ENCODE measurements at regions of chr20 and their contacts with region 1.

Region 1: DNA sequence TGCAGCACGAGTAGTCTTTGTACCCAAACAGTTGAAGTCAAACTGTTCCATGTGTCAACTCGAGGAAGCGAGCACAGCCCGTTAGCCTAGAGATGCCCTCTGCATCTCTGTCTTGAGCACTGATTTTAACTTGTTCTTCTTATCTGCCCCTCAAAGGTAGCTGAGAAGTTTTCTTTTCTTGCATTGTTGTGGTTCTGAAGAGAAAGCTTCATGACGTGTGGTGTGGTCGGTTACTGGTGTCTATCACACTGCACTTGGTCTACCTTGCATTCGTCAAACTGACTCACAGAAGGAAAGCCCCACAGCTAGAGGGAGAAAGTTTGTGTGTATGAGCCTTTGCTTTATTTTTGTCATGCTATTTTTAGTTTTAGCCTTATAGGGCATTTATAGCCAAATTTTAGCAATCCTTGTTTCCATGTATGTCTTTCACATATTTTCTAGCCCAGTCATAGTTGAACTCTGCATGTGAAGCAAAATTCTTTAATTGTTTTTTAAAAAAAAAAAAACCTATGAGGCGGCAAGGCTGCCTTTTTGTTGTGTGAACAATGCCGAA is 115.1 kb downstream of the JAG1 start:
- DNase-seq: peak; percentile 92
- ATAC-seq: peak; percentile 75
- H3K4me3 ChIP-seq: peak overlapping the region; percentile 22; the same call in 1 of the 2 replicates
- H3K27ac ChIP-seq: peak overlapping the region; percentile 96
- H3K4me1 ChIP-seq: peaks cover 74% of the 10 kb centered on the region
- H3K27me3 ChIP-seq: no peaks in the 10 kb centered on the region
- CTCF ChIP-seq: no peak; the same call in 1 of the 2 replicates

Region 2: GRCh38 chr20:10115021-10115420 is 443.7 kb before region 1 on chr20:
- CTCF ChIA-PET with region 1: no interaction called
- POLR2A ChIA-PET with region 1: no interaction called
- intact Hi-C with region 1: no loop called
- DNase-seq: peak; percentile 73
- ATAC-seq: no peak
- H3K4me3 ChIP-seq: no peak overlapping the region
- H3K27ac ChIP-seq: no peak overlapping the region
- H3K4me1 ChIP-seq: peaks cover 28% of the 10 kb centered on the region
- H3K27me3 ChIP-seq: no peaks in the 10 kb centered on the region
- CTCF ChIP-seq: no peak

Region 3: GRCh38 chr20:10249048-10249770 is 309.5 kb before region 1 on chr20:
- CTCF ChIA-PET with region 1: no interaction called
- POLR2A ChIA-PET with region 1: no interaction called
- intact Hi-C with region 1: no loop called
- DNase-seq: peak; percentile 76
- ATAC-seq: peak; percentile 8; the same call in 1 of the 2 replicates
- H3K4me3 ChIP-seq: no peak overlapping the region
- H3K27ac ChIP-seq: peak overlapping the region; percentile 81; the same call in 1 of the 2 replicates
- H3K4me1 ChIP-seq: peaks cover 30% of the 10 kb centered on the region
- H3K27me3 ChIP-seq: peaks cover 22% of the 10 kb centered on the region
- CTCF ChIP-seq: no peak

Region 4: DNA sequence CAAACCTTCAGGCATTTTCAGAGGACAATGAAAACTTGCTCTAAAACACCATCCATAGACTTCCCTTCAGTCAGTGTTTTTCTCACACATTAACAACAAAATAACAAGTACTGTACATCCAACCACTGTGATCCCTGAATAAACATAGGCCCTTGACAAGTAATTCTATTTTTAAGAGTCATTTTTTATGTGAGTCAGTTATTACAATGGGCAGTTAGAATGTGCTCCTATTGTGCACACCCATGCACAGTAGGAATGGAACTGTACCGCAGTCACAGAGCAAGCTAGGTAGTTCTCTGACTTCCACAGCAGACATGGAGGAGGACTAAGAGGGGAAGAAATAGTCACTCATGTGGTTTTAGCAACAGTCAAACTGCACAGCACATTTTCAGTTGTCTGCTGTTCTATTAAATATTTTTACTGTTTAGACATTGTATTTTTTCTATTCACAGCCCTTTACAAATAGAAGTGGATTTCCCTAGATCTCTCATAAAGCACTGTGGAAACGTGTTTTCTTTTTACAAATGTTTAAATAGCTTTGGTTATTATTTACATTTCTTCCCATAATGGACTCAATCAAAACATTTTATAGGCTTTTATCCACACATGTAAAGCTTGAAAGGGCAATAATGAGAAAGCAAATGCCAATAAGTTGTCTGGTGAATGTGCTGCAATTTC is 14.7 kb after region 1 on chr20:
- CTCF ChIA-PET with region 1: no interaction called
- POLR2A ChIA-PET with region 1: no interaction called
- intact Hi-C with region 1: loop called (anchors 1 kb)
- DNase-seq: peak; percentile 82
- ATAC-seq: peak; percentile 89
- H3K4me3 ChIP-seq: no peak overlapping the region
- H3K27ac ChIP-seq: peak overlapping the region; percentile 84
- H3K4me1 ChIP-seq: peaks cover 37% of the 10 kb centered on the region
- H3K27me3 ChIP-seq: no peaks in the 10 kb centered on the region
- CTCF ChIP-seq: no peak

Region 5: GRCh38 chr20:10578607-10579006 is 19.9 kb after region 1 on chr20:
- CTCF ChIA-PET with region 1: no interaction called
- POLR2A ChIA-PET with region 1: no interaction called
- intact Hi-C with region 1: loop called (anchors 1 kb)
- DNase-seq: peak; percentile 96
- ATAC-seq: peak; percentile 78
- H3K4me3 ChIP-seq: peak overlapping the region; percentile 13; the same call in 1 of the 2 replicates
- H3K27ac ChIP-seq: peak overlapping the region; percentile 97
- H3K4me1 ChIP-seq: peaks cover 71% of the 10 kb centered on the region
- H3K27me3 ChIP-seq: no peaks in the 10 kb centered on the region
- CTCF ChIP-seq: no peak

Region 6: DNA sequence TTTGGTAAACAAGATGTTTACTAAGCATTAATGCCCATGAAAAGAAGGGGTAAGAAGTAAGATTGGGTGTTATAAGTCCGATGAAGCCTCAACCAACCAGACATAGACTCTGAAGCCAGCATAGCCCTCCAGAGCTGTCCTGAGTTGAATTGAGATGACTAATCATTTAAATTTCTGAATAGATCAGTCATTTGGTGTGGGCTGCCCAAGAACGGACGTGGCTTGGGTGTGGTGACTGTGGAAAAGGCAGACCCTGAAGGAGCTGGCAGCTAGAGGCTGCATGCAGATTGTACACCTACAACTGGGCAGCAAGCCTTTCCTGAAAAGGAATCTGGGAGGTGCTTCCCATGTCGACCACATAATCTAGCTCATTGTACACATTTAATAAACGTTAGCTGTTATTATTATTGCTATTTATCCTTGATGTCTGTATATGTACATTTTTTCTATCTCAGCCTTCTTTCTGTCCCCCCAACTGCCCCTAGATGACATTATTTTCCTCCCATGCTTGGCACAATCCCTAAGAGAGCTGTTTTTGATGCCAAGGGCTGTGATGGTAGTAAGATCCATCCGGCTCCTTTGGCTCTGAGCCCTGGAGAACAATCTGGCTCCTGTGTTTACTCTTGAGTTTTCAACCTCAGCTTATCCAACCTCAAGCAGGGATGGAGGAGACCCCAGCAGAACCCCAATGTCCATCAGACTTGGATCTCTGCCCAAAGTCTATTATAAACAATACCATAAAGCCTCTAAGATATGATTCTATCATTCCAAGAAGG is 172.7 kb after region 1 on chr20:
- CTCF ChIA-PET with region 1: no interaction called
- POLR2A ChIA-PET with region 1: no interaction called
- intact Hi-C with region 1: no loop called
- DNase-seq: peak; percentile 79
- ATAC-seq: peak; percentile 90
- H3K4me3 ChIP-seq: no peak overlapping the region
- H3K27ac ChIP-seq: peak overlapping the region; percentile 62
- H3K4me1 ChIP-seq: peaks cover 19% of the 10 kb centered on the region
- H3K27me3 ChIP-seq: no peaks in the 10 kb centered on the region
- CTCF ChIP-seq: no peak

Measured in PC-3 (cell line).